Activated T-helper 1 cell treated with anti-CD3 and anti-CD28 coated beads, Interleukin-12 subunit alpha, Interleukin-12 subunit beta, Interleukin-2, Interleukin-4 antibody, amounts not matched to agents 30 ng/mL and 10 ng/mL and 1 ng/mL, durations not matched to agents 14 hours and 24 hours and 36 hours (primary cell): ENCODE measurements at regions of chr17 and their contacts with region 1.

Region 1: DNA sequence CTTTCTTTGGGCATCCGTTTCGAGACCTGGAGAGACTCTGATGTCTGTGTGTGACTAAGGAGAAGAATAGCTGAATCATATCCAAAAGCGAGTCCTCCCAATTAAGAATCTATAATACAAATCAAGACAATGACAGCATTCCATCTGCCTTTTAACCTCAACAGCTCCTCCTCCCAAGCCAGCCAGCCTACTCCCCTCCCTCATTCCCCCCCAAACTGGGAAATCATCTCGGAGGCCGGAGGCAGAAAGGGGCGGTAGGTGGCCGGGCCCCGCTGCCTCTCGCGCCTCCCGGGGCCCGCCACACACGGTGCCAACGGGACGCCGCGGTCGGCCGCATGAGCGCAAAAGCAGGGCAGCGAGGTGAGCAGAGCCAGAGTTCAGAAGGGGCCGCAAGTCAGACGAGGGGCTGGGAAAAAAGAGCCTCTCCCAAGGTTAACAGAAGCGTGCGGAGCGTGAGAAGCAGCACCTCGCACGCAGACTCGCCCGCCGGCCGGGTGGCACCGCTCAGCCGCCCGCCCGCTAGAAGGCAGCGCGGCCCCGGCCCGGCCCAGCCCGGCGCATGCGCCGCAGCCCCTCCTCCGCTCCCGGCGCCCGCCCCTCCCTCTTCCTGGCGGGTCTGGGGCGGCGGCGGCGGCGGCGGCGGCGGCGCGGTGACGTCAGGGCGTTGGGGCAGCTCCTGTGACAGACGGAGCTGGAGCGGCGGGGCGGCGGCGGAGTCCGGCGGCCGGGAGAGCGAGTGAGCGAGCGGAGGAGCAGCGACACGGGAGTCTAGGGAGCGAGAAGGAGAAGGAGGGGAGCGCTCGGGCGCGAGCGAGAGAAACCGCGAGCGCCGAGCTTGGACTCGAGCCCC is at the start of gene PAFAH1B1:
- DNase-seq: peak; percentile 94
- H3K4me3 Mint-ChIP-seq: peak within 1 kb of the TSS; percentile 96
- H3K27ac Mint-ChIP-seq: peak within 1 kb of the TSS; percentile 94
- H3K4me1 Mint-ChIP-seq: peaks cover 28% of the 10 kb centered on the region
- H3K27me3 Mint-ChIP-seq: peaks cover 3% of the 10 kb centered on the region
- total RNA-seq, gene PAFAH1B1: 167 TPM in 2 replicates

Region 2: DNA sequence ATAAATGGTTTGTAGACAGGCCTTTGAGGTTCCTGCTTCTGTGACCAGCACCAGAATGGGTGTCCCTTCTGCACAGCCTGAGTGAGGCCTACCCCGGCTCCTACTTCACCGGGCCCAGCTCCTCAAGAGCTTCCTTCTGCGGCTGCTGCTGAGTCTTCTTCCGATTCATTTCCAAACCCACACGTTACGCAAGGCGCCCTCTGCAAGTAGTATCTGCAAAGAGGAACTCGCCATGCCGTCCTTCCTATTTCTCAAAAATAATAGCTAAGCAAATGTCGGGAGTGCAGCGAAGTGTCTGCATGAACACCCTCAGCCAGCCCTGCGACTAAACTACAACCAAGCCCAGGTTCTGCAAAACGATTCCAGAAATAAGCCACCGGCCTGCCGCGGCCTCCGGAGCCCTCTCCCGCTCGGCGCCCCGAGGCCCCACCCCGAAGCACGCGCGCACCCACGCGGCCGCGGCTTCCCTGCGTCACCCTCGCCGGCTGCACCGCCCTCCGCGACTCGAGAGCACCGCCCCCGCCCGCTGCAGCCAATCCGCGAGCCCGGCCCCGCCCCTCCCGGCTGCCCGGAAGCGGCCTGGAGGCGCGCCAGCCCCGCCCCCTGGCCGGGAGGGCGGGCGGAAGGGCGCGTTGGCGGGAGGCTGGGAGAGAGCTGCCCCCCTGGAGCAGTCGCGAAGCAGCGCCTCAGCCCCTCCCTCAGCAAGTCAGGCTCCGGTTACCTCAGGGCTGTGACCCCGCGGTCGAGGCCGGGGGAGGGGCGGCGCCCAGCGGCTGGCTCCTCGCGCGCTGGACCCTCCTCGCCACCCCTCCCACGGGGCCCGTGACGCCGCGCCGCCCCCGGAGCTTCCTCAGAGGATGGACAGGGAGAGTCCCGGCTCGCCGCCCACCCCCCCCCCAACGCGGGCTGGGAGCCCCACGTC is 200.7 kb before region 1 on chr17:
- intact Hi-C with region 1: loop called (anchors 2 kb)
- DNase-seq: peak; percentile 98
- H3K4me3 Mint-ChIP-seq: peak overlapping the region; percentile 88
- H3K27ac Mint-ChIP-seq: peak overlapping the region; percentile 96
- H3K4me1 Mint-ChIP-seq: peaks cover 34% of the 10 kb centered on the region
- H3K27me3 Mint-ChIP-seq: no peaks in the 10 kb centered on the region

Region 3: DNA sequence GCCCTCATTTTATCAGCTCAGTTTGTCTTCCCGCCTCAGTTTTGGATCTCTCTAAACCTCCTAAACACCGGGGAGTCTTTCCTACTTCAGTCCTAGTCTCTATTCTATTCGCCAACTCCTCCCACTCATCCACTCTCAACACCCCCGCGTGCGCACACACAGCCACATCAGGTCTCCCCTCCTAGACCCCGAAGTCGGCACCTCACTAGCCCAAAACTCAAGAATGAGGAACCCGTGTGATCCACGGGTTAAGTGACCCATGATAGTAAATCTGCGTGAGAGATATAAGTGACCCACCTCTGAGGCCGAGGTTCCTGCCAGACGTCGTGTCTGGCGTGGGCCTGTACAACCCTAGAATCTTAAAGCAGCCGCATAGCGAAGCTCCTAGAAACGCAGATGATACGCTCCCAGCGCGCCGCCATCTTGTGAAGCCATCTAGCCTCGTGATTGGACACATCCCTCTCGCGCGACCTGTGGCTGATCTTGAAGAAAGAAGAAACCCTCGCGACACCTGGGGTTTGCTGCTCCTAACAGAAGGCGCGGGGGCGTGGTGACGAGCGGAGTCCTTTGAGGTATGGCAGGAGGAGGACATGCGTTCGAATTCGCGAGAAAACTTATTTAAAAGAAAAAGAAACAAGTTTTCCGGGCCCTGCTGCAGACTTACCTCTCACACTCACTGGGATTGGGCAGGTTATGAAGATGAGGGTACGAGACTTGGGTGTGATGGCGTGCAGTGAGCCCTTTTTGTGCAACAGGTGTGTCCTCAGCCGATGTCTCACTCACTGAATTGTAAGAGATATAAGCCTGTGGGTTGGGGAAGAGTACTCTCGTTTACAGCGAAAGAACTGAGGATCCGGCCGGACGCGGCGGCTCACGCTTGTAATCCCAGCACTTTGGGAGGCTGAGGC is 81.5 kb before region 1 on chr17 and contains the start of gene METTL16:
- intact Hi-C with region 1: loop called (anchors 1 kb)
- DNase-seq: peak; percentile 95
- H3K4me3 Mint-ChIP-seq: no peak within 1 kb of the TSS
- H3K27ac Mint-ChIP-seq: peak within 1 kb of the TSS; percentile 9
- H3K4me1 Mint-ChIP-seq: peaks cover 11% of the 10 kb centered on the region
- H3K27me3 Mint-ChIP-seq: peaks cover 3% of the 10 kb centered on the region
- total RNA-seq, gene METTL16: 53.9 and 57.9 TPM in 2 replicates

Region 4: DNA sequence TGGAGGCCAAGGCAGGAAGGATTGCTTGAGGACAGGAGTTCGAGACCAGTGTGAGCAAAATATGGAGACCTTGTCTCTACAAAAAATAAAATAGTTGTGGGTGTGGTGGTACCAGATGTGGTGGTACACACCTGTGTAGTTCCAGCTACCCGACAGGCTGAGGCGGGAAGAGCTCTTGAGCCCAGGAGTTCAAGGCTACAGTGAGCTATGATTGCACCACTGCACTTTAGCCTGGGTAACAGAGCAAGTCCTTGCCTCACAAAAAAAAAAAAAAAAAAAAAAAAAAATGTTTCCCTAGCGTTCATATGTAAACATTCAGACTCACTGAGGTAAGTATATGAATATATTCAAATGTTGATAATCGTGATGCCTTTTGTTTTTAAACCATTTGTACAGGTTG is 78.8 kb after region 1 on chr17:
- intact Hi-C with region 1: loop called (anchors 1 kb)
- DNase-seq: no peak
- H3K4me3 Mint-ChIP-seq: no peak overlapping the region
- H3K27ac Mint-ChIP-seq: no peak overlapping the region
- H3K4me1 Mint-ChIP-seq: peaks cover 10% of the 10 kb centered on the region
- H3K27me3 Mint-ChIP-seq: no peaks in the 10 kb centered on the region

Region 5: GRCh38 chr17:2711601-2712299 is 118.6 kb after region 1 on chr17 and contains the start of gene CLUH:
- intact Hi-C with region 1: loop called (anchors 1 kb)
- DNase-seq: peak; percentile 96
- H3K4me3 Mint-ChIP-seq: peak within 1 kb of the TSS; percentile 95
- H3K27ac Mint-ChIP-seq: peak within 1 kb of the TSS; percentile 92
- H3K4me1 Mint-ChIP-seq: peaks cover 32% of the 10 kb centered on the region
- H3K27me3 Mint-ChIP-seq: no peaks in the 10 kb centered on the region
- total RNA-seq, gene CLUH: 173 and 179 TPM in 2 replicates

Region 6: GRCh38 chr17:3167574-3167973 is 574.4 kb after region 1 on chr17:
- intact Hi-C with region 1: no loop called
- DNase-seq: no peak
- H3K4me3 Mint-ChIP-seq: no peak overlapping the region
- H3K27ac Mint-ChIP-seq: no peak overlapping the region
- H3K4me1 Mint-ChIP-seq: no peaks in the 10 kb centered on the region
- H3K27me3 Mint-ChIP-seq: peaks cover 2% of the 10 kb centered on the region